ENCODE measurements at regions of chr21 and their contacts with region 1.

Region 1: GRCh38 chr21:39527664-39528381 is 76.1 kb downstream of the SH3BGR start:
- DNase-seq: no peak
- ATAC-seq: no peak
- H3K4me3 ChIP-seq: no peak overlapping the region
- H3K27ac ChIP-seq: no peak overlapping the region
- H3K4me1 ChIP-seq: no peaks in the 10 kb centered on the region
- H3K27me3 ChIP-seq: peaks cover 17 to 48% of the 10 kb centered on the region in 2 experiments; a peak in 4 of 5 replicates
- CTCF ChIP-seq: no peak
- EP300 ChIP-seq: no peak
- POLR2A ChIP-seq: no peak
- RAD21 ChIP-seq: no peak

Region 2: DNA sequence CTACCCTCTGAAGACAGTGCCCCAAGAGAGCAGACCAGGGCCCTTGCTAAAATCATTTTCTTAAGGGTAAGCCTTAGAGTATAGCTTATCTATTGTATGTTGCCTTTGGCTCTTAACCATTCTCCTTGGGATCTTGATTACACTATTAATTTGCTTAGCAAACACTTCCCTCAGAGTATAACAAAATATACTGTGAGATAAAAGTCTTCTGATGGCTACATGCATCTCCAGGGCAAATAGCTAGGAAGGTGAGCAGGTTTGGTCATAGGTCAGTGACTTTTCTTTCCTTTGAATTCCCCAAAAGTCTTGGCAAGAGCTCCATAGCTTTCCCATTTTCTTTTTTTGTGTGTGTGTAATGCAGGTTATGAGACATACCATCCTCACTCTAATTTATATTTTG is 174.3 kb after region 1 on chr21:
- CTCF ChIA-PET with region 1: no interaction called
- POLR2A ChIA-PET with region 1: interaction called, 3 read pairs
- in situ Hi-C with region 1: loop called (anchors 5 kb)
- intact Hi-C with region 1: no loop called
- DNase-seq: no peak
- ATAC-seq: no peak
- H3K4me3 ChIP-seq: no peak overlapping the region
- H3K27ac ChIP-seq: no peak overlapping the region
- H3K4me1 ChIP-seq: no peaks in the 10 kb centered on the region
- H3K27me3 ChIP-seq: no peaks in the 10 kb centered on the region; a peak in 1 of 5 replicates
- CTCF ChIP-seq: no peak
- EP300 ChIP-seq: no peak
- POLR2A ChIP-seq: no peak
- RAD21 ChIP-seq: no peak

Region 3: DNA sequence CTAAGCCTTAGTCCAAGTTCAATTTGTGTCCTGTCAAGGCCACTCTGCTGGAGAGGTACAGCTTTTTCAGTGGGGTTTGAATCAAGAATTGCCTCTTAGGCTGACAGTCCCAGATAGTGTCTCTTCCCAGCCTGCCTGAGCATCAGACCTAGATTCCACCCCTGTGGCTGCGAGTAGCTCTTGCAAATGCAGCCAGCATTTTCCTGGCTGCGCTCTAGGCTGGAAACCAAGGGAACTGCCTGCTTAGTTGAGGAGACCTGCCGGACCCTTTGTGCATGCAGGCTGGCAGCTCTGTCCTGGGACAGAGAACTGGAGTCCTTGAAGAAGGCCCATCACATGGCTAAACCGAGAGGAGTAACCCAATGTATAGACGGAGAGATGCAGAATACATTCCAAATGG is 633.1 kb after region 1 on chr21:
- CTCF ChIA-PET with region 1: no interaction called
- POLR2A ChIA-PET with region 1: no interaction called
- in situ Hi-C with region 1: no loop called
- intact Hi-C with region 1: no loop called
- DNase-seq: no peak
- ATAC-seq: no peak
- H3K4me3 ChIP-seq: no peak overlapping the region
- H3K27ac ChIP-seq: no peak overlapping the region
- H3K4me1 ChIP-seq: no peaks in the 10 kb centered on the region
- H3K27me3 ChIP-seq: no peaks in the 10 kb centered on the region
- CTCF ChIP-seq: no peak
- EP300 ChIP-seq: no peak
- POLR2A ChIP-seq: no peak
- RAD21 ChIP-seq: no peak

Measured in K562 (cell line).